B cell (primary cell): ENCODE measurements at regions of chr9 and their contacts with region 1.

Region 1: GRCh38 chr9:89597711-89598625 is 6.8 kb upstream of the GADD45G start:
- DNase-seq: peak; percentile 74
- ATAC-seq: no peak
- H3K4me3 ChIP-seq: no peak overlapping the region
- H3K4me3 Mint-ChIP-seq: no peak overlapping the region
- H3K27ac ChIP-seq: no peak overlapping the region
- H3K27ac Mint-ChIP-seq: no peak overlapping the region
- H3K4me1 ChIP-seq: peaks cover 0 to 3% of the 10 kb centered on the region in 2 donors
- H3K4me1 Mint-ChIP-seq: peaks cover 1% of the 10 kb centered on the region
- H3K27me3 ChIP-seq: peaks cover 0 to 14% (median 3%) of the 10 kb centered on the region in 4 experiments
- H3K27me3 Mint-ChIP-seq: peaks cover 22% of the 10 kb centered on the region
- CTCF ChIP-seq: peak; percentile 80

Region 2: DNA sequence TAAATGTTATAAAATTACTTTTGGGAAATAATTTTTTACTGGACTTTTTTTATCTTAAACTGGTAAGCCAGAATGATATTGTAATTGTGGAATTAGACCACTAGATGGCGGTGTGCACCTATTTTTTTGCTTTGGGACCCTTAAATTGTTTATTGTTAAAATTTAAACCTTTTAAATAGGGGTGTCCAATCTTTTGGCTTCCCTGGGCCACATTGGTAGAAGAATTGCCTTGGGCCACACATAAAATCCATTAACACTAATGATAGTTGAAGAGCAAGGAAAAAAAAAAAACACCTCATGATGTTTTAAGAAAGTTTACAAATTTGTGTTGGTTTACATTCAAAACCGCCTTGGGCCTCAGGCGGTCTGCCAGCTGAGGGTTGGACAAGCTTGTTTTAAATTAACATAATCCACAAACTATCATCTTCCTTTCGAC is 21.5 kb before region 1 on chr9:
- CTCF ChIA-PET with region 1: interaction called, 23 read pairs
- POLR2A ChIA-PET with region 1: no interaction called
- intact Hi-C with region 1: no loop called
- DNase-seq: peak; percentile 53
- ATAC-seq: no peak
- H3K4me3 ChIP-seq: no peak overlapping the region
- H3K4me3 Mint-ChIP-seq: no peak overlapping the region
- H3K27ac ChIP-seq: no peak overlapping the region
- H3K27ac Mint-ChIP-seq: no peak overlapping the region
- H3K4me1 ChIP-seq: no peaks in the 10 kb centered on the region
- H3K4me1 Mint-ChIP-seq: peaks cover 2% of the 10 kb centered on the region
- H3K27me3 ChIP-seq: peaks cover 0 to 14% (median 11%) of the 10 kb centered on the region in 4 experiments
- H3K27me3 Mint-ChIP-seq: peaks cover 37% of the 10 kb centered on the region
- CTCF ChIP-seq: peak; percentile 96

Region 3: GRCh38 chr9:90095682-90096081 is 497.7 kb after region 1 on chr9:
- CTCF ChIA-PET with region 1: interaction called, 406 read pairs
- POLR2A ChIA-PET with region 1: no interaction called
- intact Hi-C with region 1: no loop called
- DNase-seq: no peak
- ATAC-seq: no peak
- H3K4me3 ChIP-seq: no peak overlapping the region
- H3K4me3 Mint-ChIP-seq: no peak overlapping the region
- H3K27ac ChIP-seq: no peak overlapping the region
- H3K27ac Mint-ChIP-seq: no peak overlapping the region
- H3K4me1 ChIP-seq: no peaks in the 10 kb centered on the region
- H3K4me1 Mint-ChIP-seq: no peaks in the 10 kb centered on the region
- H3K27me3 ChIP-seq: peaks cover 0 to 6% (median 3%) of the 10 kb centered on the region in 4 experiments
- H3K27me3 Mint-ChIP-seq: peaks cover 9% of the 10 kb centered on the region
- CTCF ChIP-seq: no peak

Region 4: DNA sequence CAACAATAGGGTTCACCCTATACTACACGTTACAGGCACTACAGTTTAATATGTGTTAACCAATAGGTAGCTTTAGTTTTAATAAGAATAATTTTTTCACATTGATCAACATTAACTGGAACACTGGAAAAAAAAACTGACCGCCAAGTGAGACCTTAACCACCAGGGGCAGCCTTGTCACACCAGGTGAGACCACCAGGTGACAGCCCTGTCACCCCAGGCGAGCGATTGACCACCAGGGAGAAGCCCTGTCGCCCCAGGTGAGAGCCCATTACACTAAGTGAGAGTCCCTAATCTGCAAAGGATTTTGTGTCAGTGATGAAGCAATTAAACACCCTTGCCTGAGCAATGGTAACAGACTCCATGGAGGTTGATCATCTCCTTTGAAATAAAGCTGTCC is 1128.2 kb after region 1 on chr9:
- CTCF ChIA-PET with region 1: no interaction called
- POLR2A ChIA-PET with region 1: no interaction called
- intact Hi-C with region 1: no loop called
- DNase-seq: no peak
- ATAC-seq: no peak
- H3K4me3 ChIP-seq: no peak overlapping the region
- H3K4me3 Mint-ChIP-seq: no peak overlapping the region
- H3K27ac ChIP-seq: no peak overlapping the region
- H3K27ac Mint-ChIP-seq: no peak overlapping the region
- H3K4me1 ChIP-seq: peaks cover 0 to 3% of the 10 kb centered on the region in 2 donors
- H3K4me1 Mint-ChIP-seq: peaks cover 2% of the 10 kb centered on the region
- H3K27me3 ChIP-seq: peaks cover 0 to 7% (median under 1%) of the 10 kb centered on the region in 4 experiments
- H3K27me3 Mint-ChIP-seq: peaks cover 5% of the 10 kb centered on the region
- CTCF ChIP-seq: peak; percentile 22